ENCODE measurements at regions of chr12 and their contacts with region 1.

Region 1: GRCh38 chr12:6752921-6753771 is at the start of gene MLF2:
- DNase-seq: peak; percentile 99 to 100 (median 99)
- H3K4me3 ChIP-seq: peak within 1 kb of the TSS; percentile 79 to 92 (median 91)
- H3K27ac ChIP-seq: peak within 1 kb of the TSS; percentile 99 to 100
- H3K4me1 ChIP-seq: peaks cover 7 to 16% (median 12%) of the 10 kb centered on the region in 3 donors
- H3K27me3 ChIP-seq: no peaks in the 10 kb centered on the region
- CTCF ChIP-seq: no peak
- total RNA-seq, gene MLF2: 141 TPM

Region 2: DNA sequence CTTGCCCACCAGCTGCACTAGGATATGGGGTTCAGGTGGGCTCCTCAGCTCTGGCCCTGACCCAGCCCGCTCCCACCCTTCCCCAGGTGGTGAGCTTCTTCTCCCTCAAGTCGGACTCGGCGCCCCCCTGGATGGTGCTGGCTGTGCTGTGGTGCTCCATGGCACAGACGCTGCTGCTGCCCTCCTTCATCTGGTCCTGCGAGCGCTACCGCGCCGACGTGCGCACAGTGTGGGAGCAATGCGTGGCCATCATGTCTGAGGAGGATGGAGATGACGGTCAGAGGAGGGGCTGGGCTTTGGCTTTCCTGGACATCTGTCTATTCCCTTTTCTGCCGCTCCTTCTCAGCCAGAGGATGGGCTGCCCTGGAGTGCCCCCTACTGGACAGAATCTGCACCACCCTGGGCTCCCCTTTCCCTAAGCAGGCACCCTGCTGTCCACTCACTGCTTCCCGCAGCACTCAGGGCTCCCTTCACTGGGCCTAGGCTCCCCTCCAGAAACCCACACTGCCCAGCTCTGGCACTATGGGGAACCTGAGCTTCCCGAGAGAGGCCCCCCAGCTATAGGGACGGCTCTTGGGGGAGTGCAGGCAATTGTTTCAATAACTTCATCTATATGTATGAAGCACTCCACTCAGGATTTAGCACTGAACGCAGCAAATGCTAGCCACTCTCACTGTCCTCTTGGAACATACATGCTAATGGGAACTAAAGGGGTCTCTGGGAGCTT is 72.4 kb after region 1 on chr12:
- intact Hi-C with region 1: loop called (anchors 10 kb)
- DNase-seq: peak; percentile 91 to 94 (median 93)
- H3K4me3 ChIP-seq: no peak overlapping the region
- H3K27ac ChIP-seq: no peak overlapping the region
- H3K4me1 ChIP-seq: peaks cover 0 to 29% (median 3%) of the 10 kb centered on the region in 3 donors
- H3K27me3 ChIP-seq: no peaks in the 10 kb centered on the region
- CTCF ChIP-seq: peak; percentile 88

Region 3: GRCh38 chr12:6863586-6864321 is 110.6 kb after region 1 on chr12:
- intact Hi-C with region 1: no loop called
- DNase-seq: peak in 1 of 5 donors; percentile 74
- H3K4me3 ChIP-seq: no peak overlapping the region
- H3K27ac ChIP-seq: no peak overlapping the region
- H3K4me1 ChIP-seq: peaks cover 0 to 10% (median 1%) of the 10 kb centered on the region in 3 donors
- H3K27me3 ChIP-seq: no peaks in the 10 kb centered on the region
- CTCF ChIP-seq: no peak